ENCODE measurements at regions of chr6 and their contacts with region 1.

Region 1: DNA sequence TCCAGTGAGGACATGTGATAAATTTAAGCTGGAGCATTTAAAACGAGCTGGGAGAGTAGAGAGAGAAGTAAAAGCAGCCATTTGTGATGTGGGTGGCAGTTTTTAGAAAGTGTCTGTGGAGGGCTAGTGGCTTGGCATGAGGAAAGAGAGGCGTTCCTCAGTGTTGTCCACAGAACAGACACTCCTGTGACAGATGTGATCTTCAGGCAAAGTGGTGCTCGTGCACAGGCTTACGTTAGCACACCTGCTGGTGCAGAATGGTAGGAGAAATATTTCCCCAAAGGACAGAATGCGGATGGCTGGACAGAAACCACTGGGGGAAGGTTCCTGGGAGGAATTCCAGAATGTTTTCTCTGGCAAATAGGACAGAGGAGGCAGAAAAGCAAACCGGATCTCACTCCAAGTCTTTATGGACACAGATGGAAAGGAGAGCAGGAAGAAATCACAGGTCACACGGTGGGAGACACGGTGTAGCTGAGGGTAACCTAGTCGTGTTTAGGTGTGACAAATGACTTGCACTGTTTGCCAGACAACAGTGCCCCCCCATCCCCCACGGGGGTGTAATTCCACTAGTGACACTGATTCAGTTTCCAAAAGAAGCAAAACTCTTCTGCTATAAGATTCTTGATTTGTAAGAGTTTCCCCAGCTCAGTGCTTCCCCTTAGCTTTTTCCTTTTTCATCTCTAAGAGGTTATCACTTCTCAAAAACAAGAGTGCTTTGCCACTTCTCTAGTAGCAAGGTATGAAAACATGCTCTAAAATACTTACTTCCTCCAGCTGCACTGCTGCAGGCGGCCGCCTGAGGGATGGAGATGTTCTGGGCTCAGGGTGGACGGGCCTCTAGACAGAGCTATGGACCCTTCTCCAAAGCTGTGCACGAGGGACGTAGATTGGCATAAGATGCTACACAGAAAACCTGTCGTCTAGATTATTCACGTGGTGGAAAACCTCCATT is 293.2 kb downstream of the QKI start:
- DNase-seq: no peak
- ATAC-seq: peak; percentile 71
- H3K4me3 ChIP-seq: peak overlapping the region; percentile 42; the same call in 1 of the 2 replicates
- H3K27ac ChIP-seq: peak overlapping the region; percentile 68
- H3K4me1 ChIP-seq: peaks cover 95% of the 10 kb centered on the region
- H3K27me3 ChIP-seq: no peaks in the 10 kb centered on the region
- CTCF ChIP-seq: peak; percentile 5 to 60 (median 55); a peak in 3 of 6 replicates
- EP300 ChIP-seq: no peak
- POLR2A ChIP-seq: no peak
- RAD21 ChIP-seq: peak; percentile 50

Region 2: GRCh38 chr6:163667372-163668060 is 40.2 kb before region 1 on chr6:
- CTCF ChIA-PET with region 1: no interaction called
- POLR2A ChIA-PET with region 1: no interaction called
- RAD21 ChIA-PET with region 1: no interaction called
- SMC1A ChIA-PET with region 1: no interaction called
- in situ Hi-C with region 1: no loop called
- intact Hi-C with region 1: loop called (anchors 5 kb)
- DNase-seq: peak; percentile 93
- ATAC-seq: peak; percentile 99
- H3K4me3 ChIP-seq: no peak overlapping the region; the same call in 1 of the 2 replicates
- H3K27ac ChIP-seq: peak overlapping the region; percentile 83
- H3K4me1 ChIP-seq: peaks cover 25% of the 10 kb centered on the region
- H3K27me3 ChIP-seq: no peaks in the 10 kb centered on the region
- CTCF ChIP-seq: no peak
- EP300 ChIP-seq: peak in 1 of 2 experiments; percentile 45; a peak in 1 of 4 replicates
- POLR2A ChIP-seq: 0 out of 2 replicates have a peak, but pooled peaks have one; percentile 20
- RAD21 ChIP-seq: peak; percentile 26; the same call in 1 of the 2 replicates

Region 3: GRCh38 chr6:163745536-163746400 is 38.1 kb after region 1 on chr6:
- CTCF ChIA-PET with region 1: no interaction called
- POLR2A ChIA-PET with region 1: no interaction called
- RAD21 ChIA-PET with region 1: no interaction called
- SMC1A ChIA-PET with region 1: no interaction called
- in situ Hi-C with region 1: no loop called
- intact Hi-C with region 1: no loop called
- DNase-seq: no peak
- ATAC-seq: no peak
- H3K4me3 ChIP-seq: no peak overlapping the region
- H3K27ac ChIP-seq: no peak overlapping the region
- H3K4me1 ChIP-seq: peaks cover 6% of the 10 kb centered on the region
- H3K27me3 ChIP-seq: no peaks in the 10 kb centered on the region
- CTCF ChIP-seq: no peak
- EP300 ChIP-seq: no peak
- POLR2A ChIP-seq: no peak
- RAD21 ChIP-seq: no peak

Region 4: DNA sequence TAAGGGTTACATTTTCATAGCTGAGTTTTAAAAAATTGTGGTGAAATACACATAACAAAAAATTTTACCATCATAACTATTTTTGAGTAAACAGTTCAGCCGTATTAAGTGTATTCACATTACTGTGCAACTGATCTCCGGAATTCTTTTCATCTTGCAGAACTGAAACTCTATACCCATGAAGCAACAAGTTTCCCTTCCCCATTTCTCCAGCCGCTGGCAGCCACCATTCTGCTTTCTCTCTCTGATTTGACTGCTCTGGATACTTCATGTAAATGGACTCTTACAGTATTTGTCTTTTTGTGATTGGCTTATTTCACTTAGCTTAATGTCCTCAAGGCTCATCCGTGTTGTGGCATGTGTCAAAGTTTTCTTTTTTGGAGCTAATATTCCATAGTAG is 48.4 kb after region 1 on chr6:
- CTCF ChIA-PET with region 1: no interaction called
- POLR2A ChIA-PET with region 1: no interaction called
- RAD21 ChIA-PET with region 1: no interaction called
- SMC1A ChIA-PET with region 1: no interaction called
- in situ Hi-C with region 1: no loop called
- intact Hi-C with region 1: loop called (anchors 2 kb)
- DNase-seq: peak; percentile 90
- ATAC-seq: peak; percentile 100
- H3K4me3 ChIP-seq: no peak overlapping the region
- H3K27ac ChIP-seq: no peak overlapping the region
- H3K4me1 ChIP-seq: peaks cover 7% of the 10 kb centered on the region; the same call in 1 of the 2 replicates
- H3K27me3 ChIP-seq: no peaks in the 10 kb centered on the region
- CTCF ChIP-seq: no peak
- EP300 ChIP-seq: peak in 1 of 2 experiments; percentile 95; a peak in 2 of 4 replicates
- POLR2A ChIP-seq: no peak
- RAD21 ChIP-seq: no peak

Region 5: DNA sequence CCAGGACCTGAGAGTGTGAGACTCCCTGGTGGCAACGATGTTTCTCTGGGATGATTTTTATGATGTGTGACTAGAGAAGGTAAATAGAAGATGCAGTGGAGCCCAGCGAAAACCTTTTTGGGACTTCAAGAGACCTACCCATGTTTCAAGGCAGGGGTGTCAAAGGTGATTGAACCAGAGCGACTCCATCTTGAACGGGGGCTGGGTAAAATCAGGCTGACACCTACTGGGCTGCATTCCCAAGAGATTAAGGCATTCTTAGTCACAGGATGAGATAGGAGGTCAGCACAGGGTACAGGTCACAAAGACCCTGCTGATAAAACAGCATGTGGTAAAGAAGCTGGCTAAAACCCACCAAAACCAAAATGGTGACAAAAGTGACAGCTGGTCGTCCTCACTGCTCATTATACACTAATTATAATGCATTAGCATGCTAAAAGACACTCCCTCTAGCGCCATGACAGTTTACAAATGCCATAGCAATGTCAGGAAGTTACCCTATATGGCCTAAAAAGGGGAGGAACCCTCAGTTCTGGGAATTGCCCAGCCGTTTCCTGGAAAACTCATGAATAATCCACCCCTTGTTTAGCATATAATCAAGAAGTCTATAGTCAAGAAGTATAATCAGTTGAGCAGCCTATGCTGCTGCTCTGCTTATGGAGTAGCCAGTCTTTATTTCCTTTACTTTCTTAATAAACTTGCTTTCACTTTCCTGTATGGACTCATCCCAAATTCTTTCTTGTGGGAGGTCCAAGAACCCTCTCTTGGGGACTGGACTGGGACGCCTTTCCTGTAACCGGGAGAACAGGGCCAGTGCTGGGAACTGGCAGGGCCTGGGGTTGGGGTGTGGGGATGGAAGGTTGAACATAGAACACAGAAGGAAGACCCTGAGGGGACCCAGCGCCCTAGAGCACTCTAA is 233.3 kb after region 1 on chr6:
- CTCF ChIA-PET with region 1: no interaction called
- POLR2A ChIA-PET with region 1: no interaction called
- RAD21 ChIA-PET with region 1: no interaction called
- SMC1A ChIA-PET with region 1: no interaction called
- in situ Hi-C with region 1: no loop called
- intact Hi-C with region 1: no loop called
- DNase-seq: no peak
- ATAC-seq: no peak
- H3K4me3 ChIP-seq: no peak overlapping the region
- H3K27ac ChIP-seq: no peak overlapping the region
- H3K4me1 ChIP-seq: no peaks in the 10 kb centered on the region
- H3K27me3 ChIP-seq: no peaks in the 10 kb centered on the region
- CTCF ChIP-seq: no peak
- EP300 ChIP-seq: no peak
- POLR2A ChIP-seq: no peak
- RAD21 ChIP-seq: no peak